ENCODE measurements at regions of chr3 and their contacts with region 1.

Region 1: GRCh38 chr3:12663936-12664908 is at the start of gene RAF1:
- DNase-seq: peak; percentile 97 to 99 (median 98)
- H3K4me3 ChIP-seq: peak within 1 kb of the TSS; percentile 65 to 99 (median 92)
- H3K27ac ChIP-seq: peak within 1 kb of the TSS; percentile 76 to 100 (median 100)
- H3K27me3 ChIP-seq: no peaks in the 10 kb centered on the region
- CTCF ChIP-seq: peak in 31 of 56 donors; percentile 4 to 55 (median 29)
- total RNA-seq, gene RAF1: 58.1 to 110 (median 75.9) TPM

Region 2: GRCh38 chr3:12235691-12236090 is 428.5 kb before region 1 on chr3:
- intact Hi-C with region 1: no loop called
- DNase-seq: no peak
- H3K4me3 ChIP-seq: no peak overlapping the region
- H3K27ac ChIP-seq: no peak overlapping the region
- H3K27me3 ChIP-seq: peaks cover 0 to 2% (median 0%) of the 10 kb centered on the region in 45 donors
- CTCF ChIP-seq: no peak

Region 3: GRCh38 chr3:12484198-12484974 is 179.8 kb before region 1 on chr3 and contains the start of gene TSEN2:
- intact Hi-C with region 1: loop called (anchors 5 kb)
- DNase-seq: peak; percentile 80 to 94 (median 88)
- H3K4me3 ChIP-seq: peak within 1 kb of the TSS; percentile 54 to 98 (median 86)
- H3K27ac ChIP-seq: peak within 1 kb of the TSS; percentile 59 to 95 (median 85)
- H3K27me3 ChIP-seq: no peaks in the 10 kb centered on the region
- CTCF ChIP-seq: peak in 50 of 56 donors; percentile 11 to 72 (median 44)
- total RNA-seq, gene TSEN2: 21.3 to 45.6 (median 32.3) TPM

Region 4: DNA sequence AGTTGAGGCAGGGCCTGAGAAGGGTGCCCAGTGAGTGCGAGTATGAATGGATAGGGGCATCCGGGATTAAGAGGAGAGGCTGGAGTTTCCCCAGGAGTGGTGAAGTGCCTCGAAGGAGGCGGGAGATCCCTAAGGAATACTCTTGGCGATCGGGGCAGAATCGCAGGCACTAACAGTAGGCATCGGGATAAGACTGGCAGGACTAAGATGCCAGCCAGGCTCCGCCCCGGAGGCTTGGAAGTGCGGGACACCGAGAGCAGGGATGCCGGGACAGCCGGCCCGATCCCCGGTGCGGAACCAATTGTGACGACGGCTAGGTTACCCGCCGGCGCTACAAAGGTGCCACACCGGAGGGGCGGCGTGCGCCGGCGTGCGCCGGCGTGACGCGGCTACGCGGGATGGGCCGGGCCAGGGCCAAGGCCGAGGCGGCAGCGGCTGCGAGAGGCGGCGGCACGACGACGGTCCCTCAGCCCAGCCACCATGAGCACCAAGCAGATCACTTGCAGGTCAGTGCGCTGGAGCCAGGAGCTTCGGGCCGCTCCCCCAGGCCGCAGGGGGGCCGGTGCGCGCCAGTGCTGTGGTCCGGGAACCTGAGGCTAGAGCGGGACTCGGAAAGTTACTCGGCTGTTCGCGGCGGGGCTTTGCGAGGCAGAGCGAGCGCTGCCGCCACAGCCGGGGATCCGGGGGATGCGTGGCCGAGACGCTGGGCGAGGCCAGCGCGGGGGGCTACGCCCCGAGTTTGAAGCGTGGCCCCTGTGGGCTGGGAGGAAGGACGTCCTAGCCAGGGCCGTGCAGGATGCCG is 107.3 kb before region 1 on chr3 and contains the start of gene MKRN2:
- intact Hi-C with region 1: loop called (anchors 1 kb)
- DNase-seq: peak; percentile 72 to 92 (median 83)
- H3K4me3 ChIP-seq: peak within 1 kb of the TSS; percentile 74 to 100 (median 92)
- H3K27ac ChIP-seq: peak within 1 kb of the TSS; percentile 32 to 96 (median 89)
- H3K27me3 ChIP-seq: peaks cover 0 to 25% (median 0%) of the 10 kb centered on the region in 45 donors
- CTCF ChIP-seq: peak in 29 of 56 donors; percentile 4 to 58 (median 21)
- total RNA-seq, gene MKRN2: 24.4 to 47.5 (median 34.3) TPM

Region 5: GRCh38 chr3:12796171-12797123 is 132.2 kb after region 1 on chr3 and contains the start of gene CAND2:
- intact Hi-C with region 1: loop called (anchors 10 kb)
- DNase-seq: peak in 9 of 10 donors; percentile 47 to 81 (median 70)
- H3K4me3 ChIP-seq: peak within 1 kb of the TSS; percentile 51 to 87 (median 76)
- H3K27ac ChIP-seq: peak within 1 kb of the TSS; percentile 66 to 98 (median 92)
- H3K27me3 ChIP-seq: no peaks in the 10 kb centered on the region
- CTCF ChIP-seq: peak in 22 of 56 donors; percentile 7 to 39 (median 22)
- total RNA-seq, gene CAND2: 12.6 to 41.8 (median 29.3) TPM

Region 6: DNA sequence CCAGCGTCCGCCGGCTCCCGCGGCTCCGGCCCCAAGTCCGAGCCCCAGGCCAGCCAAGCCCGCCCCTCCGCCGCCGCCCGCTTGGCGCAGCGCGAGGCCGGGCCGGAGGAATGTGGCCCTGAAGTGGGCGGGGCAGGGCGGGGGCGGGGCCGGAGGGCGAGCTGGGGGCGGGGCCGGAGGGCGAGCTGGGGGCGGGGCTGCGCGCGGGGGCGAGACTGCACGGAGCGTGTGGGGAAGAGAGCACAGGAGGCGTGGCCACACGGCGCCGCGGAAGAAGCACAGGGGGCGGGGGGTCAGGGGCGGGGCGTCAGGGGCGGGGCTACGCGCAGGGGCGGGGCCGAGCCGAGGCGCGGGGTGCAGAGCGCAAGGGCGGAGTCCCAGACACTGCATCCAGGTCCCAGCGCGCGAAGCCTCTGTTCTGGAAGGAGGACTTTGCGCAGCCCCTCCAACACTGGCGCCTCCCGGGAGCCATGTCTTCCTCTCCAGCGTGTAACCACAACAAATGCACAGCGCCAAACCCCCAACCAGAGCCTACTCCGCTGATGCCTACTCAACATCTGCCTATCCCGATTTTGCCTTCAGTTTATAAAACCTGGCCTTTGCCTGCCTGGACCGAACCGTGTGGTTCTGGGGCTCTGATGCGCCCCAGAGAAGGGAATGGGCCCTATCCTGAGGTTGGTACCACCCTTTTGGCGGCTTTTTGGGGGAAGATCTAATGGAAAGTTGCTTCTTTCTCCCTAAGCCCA is 303.6 kb after region 1 on chr3:
- intact Hi-C with region 1: loop called in 1 of 2 experiments (anchors 10 kb)
- DNase-seq: peak; percentile 60 to 88 (median 78)
- H3K4me3 ChIP-seq: peak overlapping the region; percentile 37 to 86 (median 71)
- H3K27ac ChIP-seq: peak overlapping the region in 48 of 59 donors; percentile 4 to 86 (median 74)
- H3K27me3 ChIP-seq: no peaks in the 10 kb centered on the region
- CTCF ChIP-seq: peak in 5 of 56 donors; percentile 5 to 18 (median 12)

Measured in dorsolateral prefrontal cortex (tissue), 120 donors.